ENCODE measurements at regions of chr1 and their contacts with region 1.

Region 1: GRCh38 chr1:147890177-147890790 is 12.3 kb upstream of the GJA8 start:
- DNase-seq: peak; percentile 80
- H3K4me3 Mint-ChIP-seq: no peak overlapping the region
- H3K27ac Mint-ChIP-seq: no peak overlapping the region
- H3K4me1 Mint-ChIP-seq: peaks cover 4% of the 10 kb centered on the region
- H3K27me3 Mint-ChIP-seq: no peaks in the 10 kb centered on the region

Region 2: DNA sequence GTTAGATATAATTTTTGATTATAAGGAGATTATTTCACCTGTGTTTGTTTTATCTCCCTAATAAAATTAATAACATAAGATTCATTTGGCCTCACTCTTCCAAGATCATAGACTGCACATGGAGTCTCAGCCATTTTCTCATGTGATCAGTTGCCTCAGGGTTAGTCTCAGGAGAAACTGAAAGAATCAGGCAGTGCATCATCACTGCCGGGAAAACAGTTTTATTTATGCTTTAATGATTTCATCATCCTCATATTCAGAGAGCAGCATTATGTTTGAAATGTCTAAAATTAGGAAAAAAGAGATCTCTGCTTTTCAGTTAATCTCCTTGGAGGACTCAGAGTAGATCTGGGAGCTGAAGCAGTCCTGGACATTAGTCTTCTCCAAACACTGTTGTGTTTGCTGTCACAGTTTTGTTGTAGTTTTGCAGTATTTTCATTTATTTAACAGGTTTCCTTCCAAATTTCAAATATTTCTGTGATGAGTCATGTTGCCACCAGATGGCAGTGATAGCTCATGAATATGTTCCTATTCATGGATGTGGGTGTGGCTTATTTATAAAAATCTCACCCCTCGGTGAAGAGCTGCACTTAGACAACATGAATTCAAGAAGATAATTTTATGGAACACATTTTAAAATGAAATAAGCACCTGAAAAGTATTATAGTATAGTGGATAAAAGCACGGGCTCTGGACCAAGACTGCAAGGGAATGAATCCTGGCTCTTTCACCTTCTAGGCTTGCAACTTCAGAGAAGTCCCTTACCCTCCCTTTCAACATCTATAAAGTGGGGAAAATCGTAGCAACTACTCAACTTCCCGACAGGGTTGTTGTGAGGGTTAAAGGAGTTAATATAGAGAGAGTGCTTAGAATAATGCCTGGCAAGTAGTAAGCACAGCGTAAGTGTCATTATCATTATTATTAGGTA is 616.6 kb before region 1 on chr1:
- CTCF ChIA-PET with region 1: interaction called, 9 read pairs
- POLR2A ChIA-PET with region 1: no interaction called
- intact Hi-C with region 1: loop called (anchors 5 kb)
- DNase-seq: no peak
- H3K4me3 Mint-ChIP-seq: no peak overlapping the region
- H3K27ac Mint-ChIP-seq: no peak overlapping the region
- H3K4me1 Mint-ChIP-seq: peaks cover 4% of the 10 kb centered on the region
- H3K27me3 Mint-ChIP-seq: no peaks in the 10 kb centered on the region

Region 3: GRCh38 chr1:147494998-147495580 is 395.2 kb before region 1 on chr1:
- CTCF ChIA-PET with region 1: interaction called, 16 read pairs
- POLR2A ChIA-PET with region 1: no interaction called
- intact Hi-C with region 1: loop called (anchors 1 kb)
- DNase-seq: peak; percentile 76
- H3K4me3 Mint-ChIP-seq: no peak overlapping the region
- H3K27ac Mint-ChIP-seq: no peak overlapping the region
- H3K4me1 Mint-ChIP-seq: no peaks in the 10 kb centered on the region
- H3K27me3 Mint-ChIP-seq: no peaks in the 10 kb centered on the region

Region 4: GRCh38 chr1:147640553-147641165 is 249.6 kb before region 1 on chr1:
- CTCF ChIA-PET with region 1: interaction called, 36 read pairs
- POLR2A ChIA-PET with region 1: no interaction called
- intact Hi-C with region 1: loop called (anchors 2 kb)
- DNase-seq: peak; percentile 87
- H3K4me3 Mint-ChIP-seq: no peak overlapping the region
- H3K27ac Mint-ChIP-seq: no peak overlapping the region
- H3K4me1 Mint-ChIP-seq: peaks cover 26% of the 10 kb centered on the region
- H3K27me3 Mint-ChIP-seq: no peaks in the 10 kb centered on the region

Region 5: DNA sequence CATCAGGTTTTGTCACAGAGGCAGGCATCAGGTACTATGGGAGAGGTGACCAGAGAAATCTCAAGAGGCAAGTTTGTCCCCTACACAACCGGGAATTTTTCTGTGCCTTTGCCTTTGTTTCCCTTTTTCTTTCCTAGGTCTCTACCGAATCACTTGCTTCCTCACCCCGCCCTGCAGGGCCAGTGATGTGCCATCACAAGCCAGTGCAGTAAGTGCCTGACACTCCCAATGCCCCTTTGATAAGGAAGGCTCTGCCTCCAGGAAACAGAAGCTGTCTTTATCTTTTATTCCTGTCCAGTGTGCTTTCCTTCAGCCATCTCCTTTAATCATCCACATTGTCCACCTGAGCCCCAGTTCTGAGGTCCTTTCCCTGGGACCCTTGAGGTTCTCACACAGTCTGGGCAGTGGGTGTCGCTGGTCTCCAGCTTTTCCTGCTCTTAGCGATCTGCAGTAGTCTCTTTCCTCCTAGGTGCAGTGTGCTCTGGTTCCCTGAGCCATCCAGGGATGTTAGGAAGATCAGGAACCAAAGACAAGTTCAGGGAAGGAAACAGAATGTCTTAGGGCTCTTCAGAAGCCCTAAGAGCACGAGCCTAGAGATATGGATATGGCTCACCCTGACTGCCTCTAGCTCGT is 166.5 kb before region 1 on chr1:
- CTCF ChIA-PET with region 1: interaction called, 38 read pairs
- POLR2A ChIA-PET with region 1: no interaction called
- intact Hi-C with region 1: loop called (anchors 1 kb)
- DNase-seq: peak; percentile 39
- H3K4me3 Mint-ChIP-seq: no peak overlapping the region
- H3K27ac Mint-ChIP-seq: no peak overlapping the region
- H3K4me1 Mint-ChIP-seq: peaks cover 4% of the 10 kb centered on the region
- H3K27me3 Mint-ChIP-seq: no peaks in the 10 kb centered on the region

Region 6: DNA sequence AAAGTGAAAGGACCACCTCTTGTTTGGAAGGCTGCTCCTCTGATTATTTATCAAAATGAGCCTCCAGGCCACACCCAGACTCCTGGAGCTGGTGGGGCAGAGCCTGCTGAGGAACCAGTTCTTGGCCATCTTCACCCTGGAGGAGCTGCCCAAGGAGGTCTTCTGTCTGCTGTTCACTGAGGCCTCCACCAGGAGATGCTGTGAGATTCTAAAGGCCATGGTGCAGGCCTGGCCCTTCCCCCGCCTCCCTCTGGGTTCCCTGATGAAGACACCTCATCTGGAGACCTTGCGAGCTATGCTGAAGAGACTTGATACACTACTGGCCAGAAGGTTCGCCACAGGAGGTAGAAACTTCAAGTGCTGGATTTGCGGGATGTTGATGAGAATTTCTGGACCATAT is 49.4 kb before region 1 on chr1:
- CTCF ChIA-PET with region 1: interaction called, 18 read pairs
- POLR2A ChIA-PET with region 1: no interaction called
- intact Hi-C with region 1: no loop called
- DNase-seq: peak; percentile 20
- H3K4me3 Mint-ChIP-seq: no peak overlapping the region
- H3K27ac Mint-ChIP-seq: no peak overlapping the region
- H3K4me1 Mint-ChIP-seq: no peaks in the 10 kb centered on the region
- H3K27me3 Mint-ChIP-seq: no peaks in the 10 kb centered on the region

Measured in activated CD4-positive, alpha-beta memory T cell treated with anti-CD3 and anti-CD28 coated beads for 36 hours (primary cell).